ENCODE measurements at regions of chr2 and their contacts with region 1.

Region 1: GRCh38 chr2:38581193-38582147 is 21.3 kb downstream of the HNRNPLL start:
- DNase-seq: peak; percentile 60
- ATAC-seq: peak; percentile 87
- H3K4me3 Mint-ChIP-seq: no peak overlapping the region
- H3K27ac Mint-ChIP-seq: no peak overlapping the region
- H3K4me1 Mint-ChIP-seq: peaks cover 32% of the 10 kb centered on the region
- H3K27me3 Mint-ChIP-seq: no peaks in the 10 kb centered on the region

Region 2: GRCh38 chr2:38535744-38536506 is 45.5 kb before region 1 on chr2:
- CTCF ChIA-PET with region 1: interaction called, 7 read pairs
- POLR2A ChIA-PET with region 1: no interaction called
- intact Hi-C with region 1: loop called (anchors 2 kb)
- DNase-seq: peak; percentile 91
- ATAC-seq: peak; percentile 98
- H3K4me3 Mint-ChIP-seq: peak overlapping the region; percentile 48
- H3K27ac Mint-ChIP-seq: no peak overlapping the region
- H3K4me1 Mint-ChIP-seq: peaks cover 2% of the 10 kb centered on the region
- H3K27me3 Mint-ChIP-seq: peaks cover 13% of the 10 kb centered on the region

Region 3: GRCh38 chr2:38561691-38562090 is 19.8 kb before region 1 on chr2:
- CTCF ChIA-PET with region 1: interaction called, 36 read pairs
- POLR2A ChIA-PET with region 1: no interaction called
- intact Hi-C with region 1: no loop called
- DNase-seq: no peak
- ATAC-seq: no peak
- H3K4me3 Mint-ChIP-seq: no peak overlapping the region
- H3K27ac Mint-ChIP-seq: no peak overlapping the region
- H3K4me1 Mint-ChIP-seq: no peaks in the 10 kb centered on the region
- H3K27me3 Mint-ChIP-seq: no peaks in the 10 kb centered on the region

Region 4: GRCh38 chr2:38653715-38654527 is 72.5 kb after region 1 on chr2:
- CTCF ChIA-PET with region 1: interaction called, 17 read pairs
- POLR2A ChIA-PET with region 1: no interaction called
- intact Hi-C with region 1: no loop called
- DNase-seq: peak; percentile 87
- ATAC-seq: peak; percentile 81
- H3K4me3 Mint-ChIP-seq: peak overlapping the region; percentile 44
- H3K27ac Mint-ChIP-seq: peak overlapping the region; percentile 98
- H3K4me1 Mint-ChIP-seq: peaks cover 58% of the 10 kb centered on the region
- H3K27me3 Mint-ChIP-seq: no peaks in the 10 kb centered on the region

Region 5: DNA sequence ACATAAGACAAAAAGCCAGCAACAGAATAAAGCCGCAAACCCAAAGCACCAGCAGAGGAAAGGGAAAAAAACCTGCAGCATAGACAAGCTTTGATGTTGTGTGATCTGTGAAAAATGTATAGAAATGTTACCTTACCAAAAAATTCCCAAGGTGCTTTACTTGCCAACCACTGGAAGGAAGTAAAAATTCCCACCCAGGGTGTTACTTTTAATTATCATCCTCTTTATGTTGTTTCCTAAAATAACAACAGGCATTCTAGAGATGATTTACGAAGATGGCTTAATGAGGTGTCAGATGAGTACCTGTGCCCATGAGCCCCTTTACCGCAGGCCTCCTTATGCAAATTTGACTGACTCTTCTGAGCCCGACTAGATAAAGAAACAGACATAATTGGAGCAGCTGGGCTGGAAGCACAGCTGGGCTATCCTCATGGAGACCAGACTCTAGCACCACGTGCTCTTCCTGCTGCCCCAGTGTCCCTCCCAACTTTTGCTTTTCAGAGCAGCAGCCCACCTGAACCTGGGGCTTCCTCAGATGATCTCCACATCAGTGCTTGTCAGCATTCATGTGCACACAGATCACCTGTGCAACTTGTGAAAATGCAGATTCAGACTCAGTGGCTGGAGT is 128.2 kb after region 1 on chr2:
- CTCF ChIA-PET with region 1: interaction called, 12 read pairs
- POLR2A ChIA-PET with region 1: interaction called, 3 read pairs
- intact Hi-C with region 1: no loop called
- DNase-seq: peak; percentile 70
- ATAC-seq: peak; percentile 75
- H3K4me3 Mint-ChIP-seq: peak overlapping the region; percentile 48
- H3K27ac Mint-ChIP-seq: peak overlapping the region; percentile 88
- H3K4me1 Mint-ChIP-seq: peaks cover 76% of the 10 kb centered on the region
- H3K27me3 Mint-ChIP-seq: no peaks in the 10 kb centered on the region

Region 6: DNA sequence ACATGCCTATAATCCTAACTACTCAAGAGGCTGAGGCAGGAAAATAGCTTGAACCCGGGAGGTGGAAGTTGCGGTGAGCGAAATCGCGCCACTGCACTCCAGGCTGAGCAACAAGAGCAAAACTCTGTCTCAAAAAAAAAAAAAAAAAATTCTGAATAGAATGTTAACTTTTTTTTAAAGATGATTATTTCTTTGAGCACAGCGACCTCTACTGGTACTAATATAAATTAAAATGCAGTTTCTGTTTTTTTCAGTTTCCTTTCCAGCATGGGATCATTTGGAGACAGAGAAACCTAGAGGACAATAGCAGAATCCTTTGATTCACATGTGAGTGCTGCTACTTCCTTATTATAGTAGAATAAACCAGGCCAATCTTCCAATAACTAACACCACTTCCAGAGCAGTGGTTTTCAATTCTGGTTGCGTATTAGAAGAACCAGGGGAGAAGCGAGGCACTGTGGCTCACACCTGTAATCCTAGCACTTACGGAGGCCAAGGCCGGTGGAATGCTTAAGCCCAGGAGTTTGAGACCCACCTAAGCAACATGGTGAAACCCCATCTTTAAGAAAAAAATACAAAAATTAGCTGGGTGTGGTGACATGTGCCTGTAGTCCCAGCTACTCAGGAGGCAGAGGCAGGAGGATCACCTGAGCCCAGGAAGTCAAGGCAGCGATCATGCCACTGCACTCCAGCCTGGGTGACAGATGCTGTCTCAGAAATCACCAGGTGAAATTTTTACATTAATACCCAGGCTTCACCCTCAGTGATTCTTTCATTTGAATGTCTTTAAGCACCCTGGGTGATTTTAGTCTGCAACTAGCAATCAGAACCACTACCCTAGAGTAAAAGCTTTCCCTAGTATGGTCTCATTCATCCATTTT is 159.6 kb after region 1 on chr2:
- CTCF ChIA-PET with region 1: interaction called, 290 read pairs
- POLR2A ChIA-PET with region 1: interaction called, 19 read pairs
- intact Hi-C with region 1: loop called (anchors 1 kb)
- DNase-seq: peak; percentile 39
- ATAC-seq: peak; percentile 5
- H3K4me3 Mint-ChIP-seq: no peak overlapping the region
- H3K27ac Mint-ChIP-seq: peak overlapping the region; percentile 47
- H3K4me1 Mint-ChIP-seq: peaks cover 55% of the 10 kb centered on the region
- H3K27me3 Mint-ChIP-seq: no peaks in the 10 kb centered on the region

Region 7: DNA sequence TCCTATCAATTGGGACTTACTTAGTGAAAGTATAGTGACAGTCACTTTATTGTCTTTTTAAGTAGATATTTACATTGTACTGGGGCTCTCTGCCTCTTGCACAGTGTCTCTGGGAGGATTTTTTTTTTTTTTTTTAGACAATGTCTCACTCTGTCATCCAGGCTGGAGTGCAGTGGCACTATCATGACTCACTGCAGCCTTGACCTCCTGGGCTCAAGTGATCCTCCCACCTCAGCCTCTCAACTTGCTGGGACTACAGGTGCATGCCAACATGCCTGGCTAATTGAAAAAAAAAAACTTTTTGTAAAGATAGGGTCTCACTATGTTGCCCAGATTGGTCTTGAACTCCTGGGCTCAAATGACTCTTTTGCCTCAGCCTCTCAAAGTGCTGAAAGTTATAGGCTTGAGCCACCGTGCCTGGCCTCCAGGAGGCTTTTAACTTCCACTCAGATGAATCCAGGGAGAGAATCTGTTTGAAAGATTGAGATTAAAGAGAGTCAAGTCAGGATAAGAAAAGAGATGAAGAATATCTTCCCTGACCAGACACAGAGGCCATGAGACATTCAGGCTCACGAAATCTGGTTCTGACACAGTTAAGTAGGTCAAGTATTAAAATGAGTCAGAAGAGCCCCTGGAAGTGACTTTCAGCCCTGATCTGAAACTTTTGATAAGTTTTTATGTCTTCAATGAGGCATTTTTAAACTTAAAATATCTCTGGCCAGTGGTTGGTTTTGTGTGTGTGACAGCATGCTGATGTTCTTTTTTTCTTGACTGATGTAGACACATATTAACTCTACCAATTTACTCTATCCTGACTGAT is 326.5 kb after region 1 on chr2:
- CTCF ChIA-PET with region 1: no interaction called
- POLR2A ChIA-PET with region 1: no interaction called
- intact Hi-C with region 1: no loop called
- DNase-seq: peak; percentile 14
- ATAC-seq: peak; percentile 86
- H3K4me3 Mint-ChIP-seq: no peak overlapping the region
- H3K27ac Mint-ChIP-seq: peak overlapping the region; percentile 23
- H3K4me1 Mint-ChIP-seq: peaks cover 15% of the 10 kb centered on the region
- H3K27me3 Mint-ChIP-seq: no peaks in the 10 kb centered on the region

Measured in activated CD4-positive, alpha-beta T cell treated with anti-CD3 and anti-CD28 coated beads for 36 hours (primary cell).